Endothelial cell of umbilical vein (primary cell): ENCODE measurements at regions of chr11 and their contacts with region 1.

Region 1: DNA sequence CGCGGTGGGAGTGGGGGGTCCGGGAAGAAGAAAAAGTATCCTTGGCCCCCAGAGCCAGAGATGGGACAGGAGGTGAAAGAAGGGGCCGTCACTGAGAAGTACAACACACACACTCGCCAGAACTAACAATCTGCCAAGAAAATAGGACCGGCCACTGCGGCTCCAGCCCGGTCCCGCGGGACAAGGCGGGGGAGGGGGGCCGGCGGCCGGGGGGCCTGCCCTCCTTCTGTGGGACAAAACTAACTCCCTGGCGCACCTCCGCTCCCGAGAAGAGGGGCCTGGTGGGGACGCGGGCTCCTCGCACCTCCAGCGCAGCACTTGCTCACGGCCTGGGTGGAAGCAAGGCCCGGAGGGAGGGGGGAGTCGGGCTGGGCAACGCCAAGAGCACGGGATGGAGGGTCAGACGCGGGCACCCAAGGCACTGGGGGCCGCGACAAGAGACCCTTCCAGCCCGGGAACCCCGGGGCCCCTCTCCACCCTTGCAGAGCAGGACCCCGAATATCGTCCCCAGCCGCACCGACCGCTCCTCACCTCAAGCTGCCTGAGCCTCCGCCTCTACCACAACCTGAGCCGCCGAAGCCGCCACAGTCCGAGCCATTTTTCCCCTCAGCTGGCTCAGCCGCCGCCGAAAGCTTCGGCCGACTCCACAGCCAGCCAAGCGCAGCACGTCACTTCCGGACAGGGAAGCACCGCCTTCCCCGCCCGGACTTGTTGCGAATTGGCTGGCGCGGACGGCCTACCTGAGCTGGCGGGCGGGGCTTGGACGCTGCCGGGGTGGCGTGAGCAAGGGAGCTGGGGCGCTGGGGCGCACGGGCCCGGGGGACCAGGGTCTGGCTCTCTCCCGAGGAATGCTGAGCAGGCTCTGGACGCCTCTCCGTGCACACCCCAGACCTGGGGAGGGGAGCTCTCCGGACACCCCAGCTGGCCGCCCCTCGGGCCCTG is at the start of gene PIK3C2A:
- DNase-seq: peak; percentile 91
- H3K4me3 ChIP-seq: peak within 1 kb of the TSS; percentile 62 to 99 (median 98)
- H3K27ac ChIP-seq: peak within 1 kb of the TSS; percentile 98
- H3K4me1 ChIP-seq: peaks cover 28% of the 10 kb centered on the region
- H3K27me3 ChIP-seq: no peaks in the 10 kb centered on the region
- CTCF ChIP-seq: no peak
- POLR2A ChIP-seq: peak; percentile 96
- total RNA-seq, gene PIK3C2A: 142 and 148 TPM in 2 replicates

Region 2: DNA sequence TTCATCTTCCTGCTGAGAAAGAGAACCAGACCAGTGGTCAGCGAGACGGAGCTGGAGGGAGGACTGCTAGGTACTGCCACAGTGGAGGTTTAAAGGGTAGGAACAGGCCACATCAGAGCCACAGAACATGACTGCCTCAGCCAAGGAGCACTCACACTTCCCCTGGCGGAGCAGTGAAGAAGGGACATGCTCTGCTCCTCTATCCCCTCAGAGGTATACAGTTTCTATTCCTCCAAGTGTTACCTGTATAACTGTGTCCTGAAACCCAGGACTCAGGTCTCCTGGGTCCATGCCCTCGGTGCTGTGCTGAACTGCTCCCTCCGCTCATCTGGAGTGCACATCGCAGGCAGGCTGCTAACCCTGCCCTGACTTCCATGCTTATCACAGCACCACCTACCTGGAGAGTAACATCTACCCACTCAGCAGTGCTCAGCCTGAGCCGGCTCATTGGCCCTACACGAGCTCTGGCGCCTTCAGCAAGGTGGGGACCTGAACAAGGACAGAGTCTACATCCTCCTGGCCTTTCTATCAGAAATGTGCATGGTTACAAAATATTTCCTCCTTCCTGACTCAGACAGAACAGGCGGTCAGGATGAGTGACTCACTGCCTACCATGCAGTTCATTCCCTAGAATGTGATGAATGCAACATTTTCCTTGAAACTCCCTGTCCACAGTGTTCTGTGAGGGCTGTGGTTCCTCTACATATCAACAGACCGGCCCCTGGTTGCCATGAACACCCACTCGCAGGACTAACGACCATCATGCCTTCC is 416.2 kb before region 1 on chr11:
- CTCF ChIA-PET with region 1: interaction called, 3 read pairs
- POLR2A ChIA-PET with region 1: interaction called, 7 read pairs
- dilution Hi-C with region 1: no loop called
- intact Hi-C with region 1: loop called (anchors 2 kb)
- DNase-seq: peak; percentile 94
- H3K4me3 ChIP-seq: no peak overlapping the region
- H3K27ac ChIP-seq: peak overlapping the region; percentile 89
- H3K4me1 ChIP-seq: peaks cover 52% of the 10 kb centered on the region
- H3K27me3 ChIP-seq: no peaks in the 10 kb centered on the region
- CTCF ChIP-seq: no peak
- POLR2A ChIP-seq: peak; percentile 55

Region 3: GRCh38 chr11:17161515-17161914 is 46.1 kb before region 1 on chr11:
- CTCF ChIA-PET with region 1: interaction called, 4 read pairs
- POLR2A ChIA-PET with region 1: interaction called, 4 read pairs
- dilution Hi-C with region 1: no loop called
- intact Hi-C with region 1: loop called (anchors 2 kb)
- DNase-seq: peak; percentile 67
- H3K4me3 ChIP-seq: no peak overlapping the region
- H3K27ac ChIP-seq: no peak overlapping the region
- H3K4me1 ChIP-seq: peaks cover 75% of the 10 kb centered on the region
- H3K27me3 ChIP-seq: no peaks in the 10 kb centered on the region
- CTCF ChIP-seq: no peak
- POLR2A ChIP-seq: no peak

Region 4: GRCh38 chr11:17221968-17222367 is 14.4 kb after region 1 on chr11:
- CTCF ChIA-PET with region 1: interaction called, 34 read pairs
- POLR2A ChIA-PET with region 1: interaction called, 36 read pairs
- dilution Hi-C with region 1: no loop called
- intact Hi-C with region 1: loop called (anchors 1 kb)
- DNase-seq: no peak
- H3K4me3 ChIP-seq: no peak overlapping the region
- H3K27ac ChIP-seq: no peak overlapping the region
- H3K4me1 ChIP-seq: peaks cover 20% of the 10 kb centered on the region
- H3K27me3 ChIP-seq: no peaks in the 10 kb centered on the region
- CTCF ChIP-seq: no peak
- POLR2A ChIP-seq: no peak

Region 5: DNA sequence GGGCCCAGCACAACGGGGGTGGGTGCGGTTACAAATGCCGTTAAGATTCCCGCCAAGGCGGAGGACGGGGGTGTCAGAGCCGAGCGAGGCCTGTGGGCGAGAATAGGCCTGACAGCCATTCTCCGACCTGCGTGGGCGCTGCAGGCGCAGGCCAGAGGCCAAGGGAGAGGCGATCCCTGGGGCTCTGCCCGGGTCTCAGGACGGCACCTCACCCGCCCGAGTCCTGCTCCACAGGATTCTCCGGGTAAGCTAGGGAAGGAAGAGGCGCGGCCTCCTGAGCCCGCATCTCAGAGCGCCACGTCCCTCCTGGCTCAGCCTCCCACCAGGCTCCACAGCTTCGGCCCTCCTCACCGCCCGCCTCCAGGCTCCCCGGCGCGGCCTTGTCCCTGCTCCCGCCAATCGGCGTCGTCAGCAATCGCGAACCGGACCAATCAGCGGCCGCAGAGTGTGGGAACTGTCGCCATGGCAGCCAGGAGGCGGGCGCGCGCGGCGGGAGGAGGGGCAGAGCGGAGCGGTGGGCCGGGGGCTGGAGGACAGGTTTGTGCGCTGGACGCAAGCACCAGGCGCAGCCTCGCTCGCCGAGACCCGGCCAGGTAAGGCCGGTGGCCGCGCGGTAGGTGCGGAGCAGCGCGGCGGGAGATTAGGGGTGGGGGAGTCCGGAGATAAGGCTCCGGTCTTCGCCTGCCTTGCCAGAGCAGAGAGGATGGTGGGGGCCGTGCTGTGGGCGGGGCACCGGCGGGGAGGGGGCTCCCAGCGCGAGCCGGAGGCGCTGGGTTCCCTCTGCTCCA is 68.8 kb after region 1 on chr11 and contains the start of gene NUCB2:
- CTCF ChIA-PET with region 1: no interaction called
- POLR2A ChIA-PET with region 1: interaction called, 8 read pairs
- dilution Hi-C with region 1: no loop called
- intact Hi-C with region 1: loop called (anchors 1 kb)
- DNase-seq: peak; percentile 98
- H3K4me3 ChIP-seq: peak within 1 kb of the TSS; percentile 84 to 95 (median 95)
- H3K27ac ChIP-seq: peak within 1 kb of the TSS; percentile 65
- H3K4me1 ChIP-seq: peaks cover 11% of the 10 kb centered on the region
- H3K27me3 ChIP-seq: no peaks in the 10 kb centered on the region
- CTCF ChIP-seq: no peak
- POLR2A ChIP-seq: peak; percentile 97
- total RNA-seq, gene NUCB2: 114 and 123 TPM in 2 replicates